HepG2 (cell line): ENCODE measurements at regions of chr1 and their contacts with region 1.

Region 1: DNA sequence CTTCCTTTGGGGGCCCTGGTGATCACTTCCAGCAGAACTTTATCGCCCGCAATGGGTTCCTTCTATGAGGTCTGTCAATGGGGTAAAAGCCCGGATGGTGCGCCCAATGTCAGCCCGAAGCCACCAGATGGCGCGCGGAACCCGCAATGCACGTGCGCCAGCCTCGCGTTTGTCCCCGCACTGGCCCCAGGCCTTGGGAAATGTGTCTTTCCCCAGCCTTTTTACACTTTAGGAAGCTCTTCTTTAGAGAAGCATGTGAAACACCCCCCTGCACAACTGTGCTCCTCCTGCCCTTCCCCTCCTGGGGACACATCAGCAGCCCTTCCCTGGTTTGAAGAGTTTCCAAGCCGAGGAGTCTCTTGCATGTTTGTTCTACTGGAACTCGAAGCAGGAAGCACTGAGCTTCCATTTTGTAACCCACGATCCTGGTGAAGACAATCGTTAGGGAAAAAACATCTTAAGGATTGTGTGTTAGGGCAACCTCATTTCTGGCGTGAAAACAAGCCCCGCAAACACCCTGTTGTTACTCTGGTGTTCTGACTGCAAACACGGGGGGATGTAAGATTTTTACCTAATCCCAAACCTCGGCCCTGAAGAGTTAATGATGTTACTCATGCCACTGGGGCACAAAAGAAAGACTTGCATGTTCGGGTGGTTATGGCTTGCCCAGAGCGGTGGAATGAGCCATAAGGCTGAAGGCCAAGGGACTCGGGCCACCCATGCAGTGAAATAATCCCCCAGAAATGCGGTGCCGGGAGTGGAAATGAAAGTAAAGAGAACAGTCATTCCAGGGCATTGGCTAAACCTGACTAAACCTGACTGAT is 20.4 kb upstream of the TARBP1 start:
- DNase-seq: peak; percentile 65
- ATAC-seq: peak; percentile 99
- H3K4me3 ChIP-seq: 0 out of 6 replicates have a peak overlapping the region, but pooled peaks of 1 of the 3 experiments have one; percentile 8
- H3K27ac ChIP-seq: peak overlapping the region; percentile 50
- H3K4me1 ChIP-seq: peaks cover 61% of the 10 kb centered on the region
- H3K27me3 ChIP-seq: no peaks in the 10 kb centered on the region
- CTCF ChIP-seq: peak; percentile 97
- EP300 ChIP-seq: no peak
- POLR2A ChIP-seq: no peak
- RAD21 ChIP-seq: peak; percentile 99

Region 2: DNA sequence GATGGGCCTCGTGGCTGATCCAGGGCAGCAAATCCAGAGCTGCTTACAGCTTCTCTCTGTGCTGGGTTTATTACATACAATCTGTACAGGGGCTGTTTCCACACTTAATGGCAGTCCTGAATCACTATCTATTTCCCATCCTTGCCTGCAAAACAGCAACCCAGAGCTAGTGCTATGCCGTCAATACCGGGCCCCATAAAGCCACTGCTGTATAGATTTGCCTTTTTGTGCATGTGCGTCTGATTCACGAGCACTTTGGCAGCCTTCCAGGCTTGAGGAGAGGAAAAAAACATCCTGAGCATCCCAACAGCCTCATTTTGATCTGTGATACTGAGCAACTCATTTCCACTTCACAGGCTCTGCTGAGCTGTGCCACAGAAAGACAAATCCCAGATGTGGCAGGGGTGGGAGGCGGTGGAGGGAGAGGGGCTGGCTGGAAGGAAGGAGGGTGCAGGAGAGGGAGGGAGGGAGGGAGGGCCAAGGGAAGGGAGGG is 44.8 kb after region 1 on chr1:
- CTCF ChIA-PET with region 1: no interaction called
- POLR2A ChIA-PET with region 1: interaction called, 12 read pairs
- in situ Hi-C with region 1: no loop called
- intact Hi-C with region 1: loop called (anchors 10 kb)
- DNase-seq: peak; percentile 78
- ATAC-seq: peak; percentile 24
- H3K4me3 ChIP-seq: peak overlapping the region in 1 of 3 experiments; percentile 67; a peak in 1 of 6 replicates
- H3K27ac ChIP-seq: peak overlapping the region; percentile 18
- H3K4me1 ChIP-seq: peaks cover 58% of the 10 kb centered on the region
- H3K27me3 ChIP-seq: peaks cover 2 to 6% of the 10 kb centered on the region in 2 experiments; a peak in 3 of 5 replicates
- CTCF ChIP-seq: no peak
- EP300 ChIP-seq: no peak
- POLR2A ChIP-seq: no peak
- RAD21 ChIP-seq: no peak

Region 3: DNA sequence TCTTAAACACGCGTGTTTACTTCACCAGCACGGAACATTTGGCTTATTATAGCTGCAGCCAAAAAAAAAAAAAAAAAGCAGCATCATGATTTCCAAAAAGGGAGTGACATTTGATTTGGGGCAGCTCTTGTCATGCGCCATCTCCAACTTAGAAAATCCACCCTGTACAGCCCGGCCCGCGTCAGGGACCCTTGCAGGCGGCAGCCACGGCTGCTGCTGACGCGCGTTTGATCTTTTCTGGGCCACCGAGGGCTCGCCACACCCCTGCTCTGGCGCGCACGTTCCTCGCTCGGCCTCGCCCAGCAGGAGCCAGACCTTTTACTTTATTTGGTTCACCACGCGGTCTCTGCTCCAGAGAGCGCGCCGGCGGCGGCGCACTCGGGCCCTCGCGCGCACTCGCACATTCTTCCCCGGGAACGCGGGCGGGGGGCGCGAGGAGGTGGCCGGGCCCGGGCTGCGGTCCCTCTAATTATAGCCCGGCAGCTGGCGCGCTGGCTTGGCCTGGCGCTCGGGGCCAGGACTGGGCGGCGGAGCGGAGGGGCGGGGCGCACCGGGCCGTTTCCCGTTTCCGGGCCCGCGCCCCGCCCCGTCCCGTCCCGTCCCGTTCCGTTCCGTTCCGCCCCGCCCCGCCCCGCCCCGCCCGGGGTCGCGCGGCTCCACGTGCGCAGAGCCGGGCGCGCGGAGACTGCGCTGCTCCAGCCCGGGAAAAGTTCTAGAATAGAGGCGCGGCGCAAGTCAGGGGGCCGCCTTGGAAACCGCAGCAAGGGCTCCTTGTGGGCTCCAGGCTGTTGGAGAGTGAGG is 100.5 kb after region 1 on chr1:
- CTCF ChIA-PET with region 1: no interaction called
- POLR2A ChIA-PET with region 1: interaction called, 22 read pairs
- in situ Hi-C with region 1: loop called (anchors 5 kb)
- intact Hi-C with region 1: loop called (anchors 2 kb)
- DNase-seq: peak; percentile 85
- ATAC-seq: peak; percentile 85
- H3K4me3 ChIP-seq: peak overlapping the region; percentile 13 to 51 (median 44); a peak in 4 of 6 replicates
- H3K27ac ChIP-seq: peak overlapping the region; percentile 100
- H3K4me1 ChIP-seq: peaks cover 41% of the 10 kb centered on the region
- H3K27me3 ChIP-seq: no peaks in the 10 kb centered on the region; a peak in 1 of 5 replicates
- CTCF ChIP-seq: 0 out of 2 replicates have a peak, but pooled peaks have one; percentile 13
- EP300 ChIP-seq: no peak; a peak in 1 of 4 replicates
- POLR2A ChIP-seq: peak; percentile 26 to 63
- RAD21 ChIP-seq: peak; percentile 81

Region 4: DNA sequence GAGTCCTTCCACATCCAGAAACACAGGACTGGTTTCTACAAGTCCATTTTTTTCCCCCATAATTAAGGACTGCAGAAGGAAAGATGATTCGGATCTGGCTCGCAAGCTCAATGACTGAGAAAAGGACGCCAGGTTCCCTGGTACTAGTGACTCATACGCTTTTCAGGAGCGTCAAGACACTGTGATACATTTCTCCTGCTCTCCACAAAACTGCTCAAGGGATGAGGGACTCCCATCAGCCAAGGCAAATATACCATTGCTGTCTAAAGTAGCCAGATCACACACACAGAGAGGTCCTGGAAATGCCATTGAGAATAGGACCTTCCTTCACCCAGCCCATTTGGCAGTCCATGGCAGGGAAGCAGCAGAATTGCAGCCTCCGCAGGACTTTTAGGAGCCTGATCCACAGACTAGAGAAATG is 364.2 kb after region 1 on chr1:
- CTCF ChIA-PET with region 1: no interaction called
- POLR2A ChIA-PET with region 1: no interaction called
- in situ Hi-C with region 1: no loop called
- intact Hi-C with region 1: no loop called
- DNase-seq: no peak
- ATAC-seq: peak; percentile 20; the same call in 2 of the 3 replicates
- H3K4me3 ChIP-seq: peak overlapping the region in 1 of 3 experiments; percentile 47; a peak in 1 of 6 replicates
- H3K27ac ChIP-seq: peak overlapping the region; percentile 84
- H3K4me1 ChIP-seq: peaks cover 74% of the 10 kb centered on the region
- H3K27me3 ChIP-seq: no peaks in the 10 kb centered on the region
- CTCF ChIP-seq: no peak
- EP300 ChIP-seq: no peak
- POLR2A ChIP-seq: no peak
- RAD21 ChIP-seq: no peak

Region 5: DNA sequence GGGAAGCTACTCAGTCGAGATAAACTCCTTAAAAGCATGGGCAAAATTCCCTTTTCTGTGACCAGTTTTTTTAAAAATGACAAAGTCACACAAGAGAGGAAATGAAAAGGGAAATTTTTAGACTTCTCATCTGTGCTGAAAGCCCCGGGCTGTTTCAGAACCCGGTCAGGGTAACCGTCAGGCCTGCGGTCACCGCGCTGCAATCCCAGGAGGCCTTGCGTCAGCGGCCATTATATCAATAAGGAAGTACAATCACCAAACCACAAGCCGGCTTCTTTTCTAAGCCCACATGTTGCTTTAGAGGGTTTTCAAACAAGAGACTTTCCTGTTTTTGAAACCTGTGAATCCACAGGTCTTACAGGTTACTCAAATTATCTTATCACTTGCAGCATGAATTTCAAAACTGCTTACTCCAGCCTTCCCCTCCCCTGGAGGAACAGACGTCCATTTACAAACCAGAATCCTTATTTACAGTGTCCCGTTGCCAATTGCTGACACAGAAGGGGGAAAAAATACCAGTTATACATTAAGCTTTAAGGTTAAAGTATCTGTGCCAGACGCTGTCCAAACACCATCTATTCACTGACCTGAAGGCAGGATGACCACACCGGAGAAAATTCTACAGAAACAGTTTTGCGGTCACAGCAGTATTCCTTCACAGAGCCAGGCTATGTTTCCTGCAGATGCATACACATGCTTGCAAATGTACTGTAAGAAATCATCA is 464.0 kb after region 1 on chr1:
- CTCF ChIA-PET with region 1: no interaction called
- POLR2A ChIA-PET with region 1: interaction called, 4 read pairs
- in situ Hi-C with region 1: no loop called
- intact Hi-C with region 1: loop called (anchors 5 kb)
- DNase-seq: peak; percentile 99
- ATAC-seq: peak; percentile 70
- H3K4me3 ChIP-seq: peak overlapping the region in 2 of 3 experiments; percentile 33 to 55; a peak in 2 of 6 replicates
- H3K27ac ChIP-seq: peak overlapping the region; percentile 100
- H3K4me1 ChIP-seq: peaks cover 78% of the 10 kb centered on the region
- H3K27me3 ChIP-seq: no peaks in the 10 kb centered on the region
- CTCF ChIP-seq: no peak
- EP300 ChIP-seq: peak in 1 of 2 experiments; percentile 98; a peak in 2 of 4 replicates
- POLR2A ChIP-seq: peak; percentile 70 to 80
- RAD21 ChIP-seq: peak; percentile 26; the same call in 1 of the 2 replicates

Region 6: DNA sequence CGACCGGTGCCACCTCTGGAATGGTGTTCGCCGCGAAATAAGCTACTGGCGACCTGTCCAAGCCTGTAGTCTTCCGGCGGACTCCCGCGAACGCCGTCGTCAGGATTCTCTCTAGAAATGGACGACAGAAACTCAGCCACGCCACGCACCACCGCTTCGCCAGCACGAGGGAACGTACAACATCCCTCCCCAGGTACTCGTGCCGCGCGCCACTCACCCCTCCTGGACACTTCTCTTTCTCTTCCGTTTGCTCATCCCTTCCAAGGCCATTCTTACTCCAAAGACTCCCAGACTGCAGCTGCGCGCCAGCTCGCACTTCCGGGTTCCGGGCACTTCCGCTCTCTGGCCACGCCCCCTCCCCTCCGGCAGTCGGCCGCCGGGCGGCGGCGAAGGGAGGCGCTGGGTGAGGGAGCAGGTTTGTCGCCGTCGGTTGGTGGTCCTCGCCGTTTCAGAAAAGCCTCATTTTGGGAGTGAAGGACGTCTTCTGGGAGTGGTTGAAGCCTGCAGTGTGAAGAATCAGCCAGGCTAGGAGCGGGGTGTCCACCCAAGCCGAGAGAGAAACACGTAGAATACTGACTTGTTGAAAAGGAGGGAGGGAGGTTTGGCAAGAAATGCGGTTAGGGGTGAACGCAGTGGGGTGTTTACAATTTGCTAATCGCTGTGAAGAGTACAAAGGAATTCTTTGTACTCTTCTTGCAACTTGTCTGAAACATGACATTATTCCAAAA is 661.8 kb after region 1 on chr1 and contains the start of gene RBM34:
- CTCF ChIA-PET with region 1: no interaction called
- POLR2A ChIA-PET with region 1: no interaction called
- in situ Hi-C with region 1: no loop called
- intact Hi-C with region 1: loop called (anchors 5 kb)
- DNase-seq: peak; percentile 89
- ATAC-seq: peak; percentile 93
- H3K4me3 ChIP-seq: peak within 1 kb of the TSS; percentile 75 to 91 (median 76)
- H3K27ac ChIP-seq: peak within 1 kb of the TSS; percentile 85
- H3K4me1 ChIP-seq: peaks cover 51% of the 10 kb centered on the region
- H3K27me3 ChIP-seq: no peaks in the 10 kb centered on the region
- CTCF ChIP-seq: peak; percentile 42
- EP300 ChIP-seq: no peak
- POLR2A ChIP-seq: peak; percentile 90 to 96
- RAD21 ChIP-seq: peak; percentile 36; the same call in 1 of the 2 replicates
- total RNA-seq, gene RBM34: 73.0 and 105 TPM in 2 replicates